Breast epithelium (tissue), 4 donors: ENCODE measurements at regions of chr11 and their contacts with region 1.

Region 1: DNA sequence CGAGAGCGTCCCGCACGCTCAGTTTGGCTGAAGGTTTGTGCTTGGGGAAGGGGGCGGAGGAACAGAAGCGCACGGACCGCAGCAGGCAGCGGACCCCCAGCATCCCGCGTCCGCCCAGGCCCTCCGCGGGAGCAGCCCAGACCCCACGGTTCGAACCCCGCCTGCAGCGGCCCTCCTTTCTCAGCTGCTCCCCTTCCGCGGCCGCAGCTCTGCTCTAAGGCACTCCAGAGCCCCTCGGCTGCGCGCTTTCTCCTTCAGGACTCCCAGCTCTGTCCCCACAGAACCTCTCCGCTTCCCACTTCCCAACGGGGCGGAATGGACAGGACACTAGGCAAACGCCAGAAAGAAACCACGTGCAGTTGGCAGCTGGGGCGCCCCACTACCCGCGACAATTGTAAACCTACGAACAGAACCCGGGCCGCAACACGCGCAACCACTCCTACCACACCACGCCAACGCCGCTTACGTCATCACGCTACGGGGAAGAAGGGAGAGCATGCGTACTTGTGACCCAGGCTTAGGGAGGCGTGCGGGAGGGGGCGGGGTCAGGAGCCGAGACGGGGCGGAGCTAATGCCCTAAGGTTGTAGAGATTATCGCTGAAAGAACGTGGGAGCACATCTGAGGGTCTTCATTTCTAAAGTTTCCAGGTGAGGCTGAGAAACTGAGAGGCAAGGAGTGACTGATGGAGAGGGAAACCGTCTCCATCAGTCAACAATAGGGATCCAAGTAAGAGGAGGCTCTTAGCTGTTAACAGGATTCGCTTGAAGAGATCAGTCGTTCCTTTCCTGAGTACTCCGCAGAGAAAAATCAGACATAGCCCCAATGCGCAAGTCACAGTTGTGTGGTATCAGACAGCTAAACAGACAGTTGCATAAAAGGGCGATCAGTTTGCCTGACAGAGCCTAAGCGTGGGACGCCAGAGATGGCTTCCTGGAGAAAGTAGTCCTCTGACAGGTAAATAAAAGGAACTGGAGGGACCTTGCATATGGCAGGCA is at the start of gene NARS2:
- DNase-seq: peak; percentile 96 to 97
- H3K4me3 ChIP-seq: peak within 1 kb of the TSS; percentile 74 to 84 (median 83)
- H3K27ac ChIP-seq: peak within 1 kb of the TSS; percentile 88
- H3K4me1 ChIP-seq: peaks cover 0 to 7% of the 10 kb centered on the region in 2 donors
- H3K27me3 ChIP-seq: no peaks in the 10 kb centered on the region
- CTCF ChIP-seq: no peak
- POLR2A ChIP-seq: peak; percentile 78
- total RNA-seq, gene NARS2: 13.3 to 21.8 (median 19.0) TPM

Region 2: GRCh38 chr11:78416305-78417178 is 158.1 kb before region 1 on chr11:
- intact Hi-C with region 1: loop called (anchors 5 kb)
- DNase-seq: peak; percentile 63 to 80
- H3K4me3 ChIP-seq: peak overlapping the region; percentile 87 to 98 (median 96)
- H3K27ac ChIP-seq: peak overlapping the region; percentile 95 to 100
- H3K4me1 ChIP-seq: no peaks in the 10 kb centered on the region
- H3K27me3 ChIP-seq: no peaks in the 10 kb centered on the region
- CTCF ChIP-seq: peak; percentile 36 to 59 (median 49)
- POLR2A ChIP-seq: peak; percentile 76